Endothelial cell of umbilical vein (primary cell): ENCODE measurements at regions of chr1 and their contacts with region 1.

Region 1: DNA sequence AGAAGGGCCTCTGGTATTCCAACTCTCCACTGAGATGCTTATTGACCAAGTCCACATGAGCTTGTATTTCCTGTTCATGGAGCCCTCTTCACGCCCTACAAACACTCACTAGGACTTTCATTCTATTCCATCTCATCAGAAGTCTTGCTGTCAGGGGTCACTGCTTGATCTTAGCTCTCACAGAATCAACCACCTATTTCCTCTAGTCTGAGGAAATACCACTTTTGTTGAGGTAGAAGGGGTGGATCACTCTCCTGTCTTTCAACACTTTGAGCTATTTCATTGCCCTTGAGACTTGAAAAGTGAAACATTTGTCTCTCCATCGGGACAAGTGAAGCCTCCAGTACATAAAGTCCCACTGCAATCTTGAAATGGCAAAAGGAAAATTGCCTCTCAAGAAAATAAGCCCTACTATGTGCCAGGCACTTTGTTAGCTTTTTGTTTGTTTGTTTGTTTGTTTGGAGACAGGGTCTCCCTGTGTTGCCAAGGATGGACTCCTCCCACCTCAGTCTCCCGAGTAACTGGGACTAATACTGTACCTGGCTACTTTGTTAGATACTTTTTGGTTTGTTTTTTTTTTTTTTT is 19.8 kb upstream of the FAM110D start:
- DNase-seq: no peak
- H3K4me3 ChIP-seq: no peak overlapping the region
- H3K27ac ChIP-seq: no peak overlapping the region
- H3K4me1 ChIP-seq: no peaks in the 10 kb centered on the region
- H3K27me3 ChIP-seq: no peaks in the 10 kb centered on the region
- CTCF ChIP-seq: no peak
- POLR2A ChIP-seq: no peak

Region 2: GRCh38 chr1:26126321-26127084 is 12.6 kb before region 1 on chr1:
- CTCF ChIA-PET with region 1: interaction called, 62 read pairs
- POLR2A ChIA-PET with region 1: no interaction called
- dilution Hi-C with region 1: no loop called
- intact Hi-C with region 1: no loop called
- DNase-seq: no peak
- H3K4me3 ChIP-seq: no peak overlapping the region
- H3K27ac ChIP-seq: no peak overlapping the region
- H3K4me1 ChIP-seq: peaks cover 16% of the 10 kb centered on the region
- H3K27me3 ChIP-seq: no peaks in the 10 kb centered on the region
- CTCF ChIP-seq: no peak
- POLR2A ChIP-seq: no peak

Region 3: GRCh38 chr1:26314501-26314900 is 175.4 kb after region 1 on chr1:
- CTCF ChIA-PET with region 1: no interaction called
- POLR2A ChIA-PET with region 1: no interaction called
- dilution Hi-C with region 1: no loop called
- intact Hi-C with region 1: no loop called
- DNase-seq: no peak
- H3K4me3 ChIP-seq: no peak overlapping the region
- H3K27ac ChIP-seq: no peak overlapping the region
- H3K4me1 ChIP-seq: no peaks in the 10 kb centered on the region
- H3K27me3 ChIP-seq: peaks cover 2 to 7% of the 10 kb centered on the region in 2 experiments
- CTCF ChIP-seq: no peak
- POLR2A ChIP-seq: no peak